Left cardiac atrium (tissue), 4 donors: ENCODE measurements at regions of chr7 and their contacts with region 1.

Region 1: GRCh38 chr7:29748286-29749108 is 57.8 kb upstream of the WIPF3 start:
- DNase-seq: no peak
- ATAC-seq: peak; percentile 61 to 78

Region 2: GRCh38 chr7:29639881-29640595 is 108.5 kb before region 1 on chr7:
- intact Hi-C with region 1: loop called in 1 of 2 experiments (anchors 10 kb)
- DNase-seq: no peak
- ATAC-seq: no peak

Region 3: GRCh38 chr7:29915481-29916215 is 167.2 kb after region 1 on chr7:
- intact Hi-C with region 1: loop called (anchors 2 to 5 kb)
- DNase-seq: no peak
- ATAC-seq: peak in 1 of 2 donors; percentile 15

Region 4: GRCh38 chr7:29921404-29922010 is 173.0 kb after region 1 on chr7:
- intact Hi-C with region 1: loop called (anchors 2 to 5 kb)
- DNase-seq: peak; percentile 28
- ATAC-seq: peak; percentile 87

Region 5: GRCh38 chr7:29946428-29947186 is 198.1 kb after region 1 on chr7:
- intact Hi-C with region 1: no loop called
- DNase-seq: peak; percentile 37
- ATAC-seq: peak; percentile 69 to 70

Region 6: GRCh38 chr7:30062591-30062990 is 314.1 kb after region 1 on chr7:
- intact Hi-C with region 1: loop called in 1 of 2 experiments (anchors 10 kb)
- DNase-seq: no peak
- ATAC-seq: peak; percentile 67 to 85